Panc1 (cell line): ENCODE measurements at regions of chr22 and their contacts with region 1.

Region 1: GRCh38 chr22:19178656-19179496 is at the start of gene SLC25A1:
- DNase-seq: no peak
- ATAC-seq: peak; percentile 82
- H3K4me3 ChIP-seq: peak within 1 kb of the TSS; percentile 66 to 70
- H3K27ac ChIP-seq: peak within 1 kb of the TSS; percentile 81
- H3K4me1 ChIP-seq: peaks cover 34% of the 10 kb centered on the region
- H3K27me3 ChIP-seq: no peaks in the 10 kb centered on the region
- CTCF ChIP-seq: no peak
- total RNA-seq, gene SLC25A1: 162 TPM

Region 2: DNA sequence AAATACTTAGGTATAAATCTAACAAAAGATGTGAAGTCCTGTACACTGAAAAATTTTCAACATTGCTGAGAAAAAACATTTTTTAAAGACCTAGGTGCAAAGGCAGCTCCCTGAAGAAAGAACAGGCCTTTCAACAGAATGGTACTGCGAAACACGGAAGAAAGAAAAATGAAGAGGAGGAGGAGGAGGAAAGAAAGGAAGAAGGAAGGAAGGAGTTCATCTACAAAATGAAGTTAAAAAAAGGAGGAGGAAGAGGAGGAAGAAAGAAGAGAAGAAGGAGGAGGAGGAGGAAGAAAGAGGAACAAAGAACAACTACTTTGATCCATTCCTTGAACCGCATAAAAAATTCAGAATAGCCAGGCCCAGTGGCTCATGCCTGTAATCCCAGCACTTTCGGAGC is 86.2 kb before region 1 on chr22:
- CTCF ChIA-PET with region 1: no interaction called
- POLR2A ChIA-PET with region 1: no interaction called
- in situ Hi-C with region 1: no loop called
- intact Hi-C with region 1: no loop called
- DNase-seq: no peak
- ATAC-seq: no peak
- H3K4me3 ChIP-seq: no peak overlapping the region
- H3K27ac ChIP-seq: no peak overlapping the region
- H3K4me1 ChIP-seq: no peaks in the 10 kb centered on the region
- H3K27me3 ChIP-seq: no peaks in the 10 kb centered on the region
- CTCF ChIP-seq: no peak

Region 3: DNA sequence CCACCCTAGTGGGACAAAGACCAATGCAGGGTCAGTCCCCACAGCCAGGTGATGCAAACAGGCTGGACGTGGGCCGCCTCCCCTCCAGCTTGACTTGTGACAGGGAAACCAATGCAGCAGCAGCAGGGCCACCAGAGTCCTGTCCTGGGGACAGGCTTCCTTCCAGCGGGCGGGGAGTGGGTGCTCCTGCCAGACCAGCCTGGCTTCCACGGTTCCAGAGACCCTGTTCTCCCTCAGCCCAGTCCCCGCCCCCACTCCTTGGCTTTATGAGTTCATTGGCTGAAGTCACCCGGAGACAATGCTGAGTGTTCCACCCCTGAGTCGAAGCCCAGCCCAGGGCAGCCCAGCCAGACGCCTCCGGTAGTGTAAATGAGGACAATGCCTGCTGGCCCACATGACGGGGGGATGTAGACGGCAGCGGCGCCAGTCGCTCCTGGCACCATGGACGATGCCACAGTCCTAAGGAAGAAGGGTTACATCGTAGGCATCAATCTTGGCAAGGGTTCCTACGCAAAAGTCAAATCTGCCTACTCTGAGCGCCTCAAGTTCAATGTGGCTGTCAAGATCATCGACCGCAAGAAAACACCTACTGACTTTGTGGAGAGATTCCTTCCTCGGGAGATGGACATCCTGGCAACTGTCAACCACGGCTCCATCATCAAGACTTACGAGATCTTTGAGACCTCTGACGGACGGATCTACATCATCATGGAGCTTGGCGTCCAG is 47.8 kb before region 1 on chr22 and contains the start of gene TSSK2:
- CTCF ChIA-PET with region 1: interaction called, 14 read pairs
- POLR2A ChIA-PET with region 1: no interaction called
- in situ Hi-C with region 1: no loop called
- intact Hi-C with region 1: no loop called
- DNase-seq: no peak
- ATAC-seq: no peak
- H3K4me3 ChIP-seq: no peak within 1 kb of the TSS
- H3K27ac ChIP-seq: no peak within 1 kb of the TSS
- H3K4me1 ChIP-seq: no peaks in the 10 kb centered on the region
- H3K27me3 ChIP-seq: no peaks in the 10 kb centered on the region
- CTCF ChIP-seq: no peak
- total RNA-seq, gene TSSK2: not detected